ENCODE measurements at regions of chr7 and their contacts with region 1.

Region 1: DNA sequence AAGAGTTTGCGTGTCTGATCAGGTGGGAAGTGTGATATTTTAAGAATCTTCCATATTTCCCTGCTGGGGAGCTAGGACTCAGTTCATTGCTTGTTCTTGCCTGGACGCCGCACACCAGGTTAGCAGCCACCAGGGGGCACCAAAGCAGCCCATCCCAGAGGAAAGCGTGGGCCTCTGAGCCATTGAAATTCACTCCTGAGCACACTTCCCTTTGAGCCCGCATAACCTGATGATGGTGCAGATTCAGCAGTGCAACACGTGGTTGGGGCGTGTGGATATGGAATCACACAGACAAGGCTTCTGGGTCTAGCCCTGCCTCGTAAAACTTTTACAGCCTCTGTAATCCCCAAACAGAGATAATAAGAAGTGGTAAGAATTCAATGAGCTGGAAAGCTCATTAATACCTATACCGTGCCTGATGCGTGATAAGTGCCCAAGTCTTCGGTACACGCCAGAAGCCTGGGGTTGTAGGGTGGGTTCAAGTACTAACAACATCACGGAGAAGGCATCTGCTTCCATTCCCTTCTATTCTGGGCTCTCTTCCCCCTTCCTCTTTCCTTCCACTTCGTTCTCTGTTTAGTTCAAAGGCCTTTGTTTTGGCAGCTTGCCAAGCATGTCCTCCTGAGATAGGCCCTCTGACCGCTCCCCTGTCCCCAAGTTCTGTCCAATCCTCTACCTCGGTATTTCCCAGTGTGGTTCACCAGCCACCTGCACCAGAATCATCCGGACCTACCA is 130.1 kb upstream of the KMT2E start:
- DNase-seq: no peak
- H3K4me3 ChIP-seq: no peak overlapping the region
- CTCF ChIP-seq: peak; percentile 96

Region 2: DNA sequence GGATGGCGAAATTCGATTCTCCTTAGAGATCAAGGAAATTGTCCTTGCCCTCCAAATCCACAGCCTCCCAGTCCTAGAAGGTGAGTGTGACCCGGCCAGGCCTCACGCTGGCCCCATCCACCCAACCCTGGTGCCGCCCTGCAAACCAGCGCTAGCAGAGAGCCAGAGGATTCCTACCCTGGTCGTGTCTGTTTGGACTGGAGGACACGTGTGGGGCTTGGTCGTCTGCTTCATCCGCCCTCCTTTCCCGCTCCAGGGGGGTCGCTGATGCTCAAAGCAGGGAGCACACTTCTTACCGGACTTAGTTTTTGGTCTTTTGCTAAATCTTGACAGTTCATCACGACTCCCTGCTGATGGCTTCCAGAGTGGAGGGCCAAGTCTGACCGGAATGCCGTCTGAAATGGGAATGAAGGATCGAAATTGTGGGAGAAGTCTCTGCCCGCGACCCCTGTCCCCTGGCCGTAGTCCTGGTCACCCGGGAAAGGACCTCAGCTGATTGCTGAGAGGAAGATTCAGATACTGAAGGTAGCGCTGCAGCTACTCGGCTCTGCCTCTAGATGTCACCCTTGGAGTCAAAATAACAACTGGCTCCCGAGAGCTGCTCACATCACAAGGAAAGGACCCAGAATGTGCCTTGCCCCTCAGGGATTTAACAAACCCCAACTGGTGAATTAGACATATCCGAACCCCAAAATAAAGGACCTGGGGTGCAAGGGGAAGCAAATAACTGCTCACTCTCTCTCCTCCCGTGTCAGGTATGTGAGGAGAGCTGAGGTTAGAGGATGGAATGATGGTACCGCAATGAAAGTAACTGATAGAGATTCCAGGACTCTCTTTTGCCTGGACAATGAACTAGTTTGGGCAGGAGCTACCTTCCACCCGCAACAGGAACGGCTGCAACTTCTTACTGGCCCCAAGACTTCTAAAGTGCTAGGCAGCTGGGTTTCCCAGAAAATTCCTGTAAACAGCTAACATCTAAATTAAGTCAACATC is 652.5 kb before region 1 on chr7:
- CTCF ChIA-PET with region 1: interaction called, 12 read pairs
- POLR2A ChIA-PET with region 1: no interaction called
- DNase-seq: no peak
- H3K4me3 ChIP-seq: peak overlapping the region; percentile 23
- CTCF ChIP-seq: peak; percentile 79

Region 3: DNA sequence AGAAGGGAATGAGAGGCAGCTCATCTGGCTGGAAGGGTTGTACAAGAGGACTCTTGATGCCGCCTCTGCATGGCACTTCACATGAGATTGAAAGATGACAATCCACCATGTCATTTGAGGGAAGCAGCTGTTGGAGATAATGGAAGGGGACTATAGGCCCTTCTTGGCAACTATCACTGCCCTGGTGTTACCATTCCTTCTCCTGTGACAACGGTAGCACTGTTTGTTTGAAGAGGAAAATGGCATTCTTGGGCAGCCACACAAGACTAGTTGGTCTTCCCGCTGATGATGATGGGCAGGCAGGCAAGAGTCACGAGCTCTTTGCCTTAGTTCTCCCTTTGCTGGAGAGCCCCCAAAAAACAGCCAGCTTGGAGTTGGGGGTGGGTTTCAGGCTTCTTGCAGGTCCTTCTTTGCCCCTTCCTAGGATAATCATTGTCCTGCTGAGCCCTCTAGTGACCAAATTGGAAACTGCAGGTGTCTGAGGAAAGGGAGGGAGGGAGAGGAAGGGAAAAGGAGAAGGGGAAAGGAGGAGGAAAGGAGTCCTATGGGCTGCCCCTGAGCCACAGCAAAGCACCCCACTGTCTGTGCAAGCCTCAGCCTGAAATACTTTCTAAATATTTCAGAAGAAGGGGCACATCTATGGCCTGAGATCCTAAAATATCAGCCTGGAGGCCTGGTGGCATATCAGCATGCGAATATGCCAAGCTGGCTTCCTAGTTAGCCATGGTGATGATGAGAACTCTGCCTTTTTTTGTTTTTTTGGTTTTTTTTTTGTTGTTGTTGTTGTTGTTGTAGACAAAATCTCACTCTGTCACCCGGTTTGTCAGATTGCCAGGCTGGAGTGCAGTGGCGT is 35.5 kb before region 1 on chr7:
- CTCF ChIA-PET with region 1: interaction called, 15 read pairs
- POLR2A ChIA-PET with region 1: no interaction called
- DNase-seq: no peak
- H3K4me3 ChIP-seq: no peak overlapping the region
- CTCF ChIP-seq: peak; percentile 78

Region 4: GRCh38 chr7:104862719-104863118 is 21.2 kb before region 1 on chr7:
- CTCF ChIA-PET with region 1: interaction called, 14 read pairs
- POLR2A ChIA-PET with region 1: no interaction called
- DNase-seq: no peak
- H3K4me3 ChIP-seq: no peak overlapping the region
- CTCF ChIP-seq: peak; percentile 32

Region 5: DNA sequence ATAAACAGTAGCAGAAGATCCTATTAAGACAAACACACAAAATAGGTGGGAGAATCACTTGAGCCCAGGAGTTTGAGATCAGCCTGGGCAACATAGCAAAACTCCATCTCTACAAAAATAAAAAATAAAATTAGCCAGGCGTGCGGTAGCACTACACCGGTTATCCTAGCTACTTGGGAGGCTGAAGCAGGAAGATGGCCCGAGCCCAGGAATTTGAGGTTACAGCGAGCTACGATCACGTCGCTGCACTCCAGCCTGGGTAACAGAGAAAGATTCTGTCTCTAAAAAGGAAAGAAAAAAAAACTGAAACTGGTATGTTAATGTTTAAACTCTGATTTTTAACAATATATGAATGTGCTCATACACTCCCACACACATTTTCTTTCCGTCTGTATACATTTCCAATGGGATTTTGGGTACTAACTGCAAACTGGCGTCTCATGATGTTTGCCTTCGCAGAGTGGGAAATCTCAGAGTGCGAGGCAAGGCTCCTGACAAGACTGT is 10.5 kb before region 1 on chr7:
- CTCF ChIA-PET with region 1: interaction called, 43 read pairs
- POLR2A ChIA-PET with region 1: no interaction called
- DNase-seq: no peak
- H3K4me3 ChIP-seq: no peak overlapping the region
- CTCF ChIP-seq: no peak

Region 6: DNA sequence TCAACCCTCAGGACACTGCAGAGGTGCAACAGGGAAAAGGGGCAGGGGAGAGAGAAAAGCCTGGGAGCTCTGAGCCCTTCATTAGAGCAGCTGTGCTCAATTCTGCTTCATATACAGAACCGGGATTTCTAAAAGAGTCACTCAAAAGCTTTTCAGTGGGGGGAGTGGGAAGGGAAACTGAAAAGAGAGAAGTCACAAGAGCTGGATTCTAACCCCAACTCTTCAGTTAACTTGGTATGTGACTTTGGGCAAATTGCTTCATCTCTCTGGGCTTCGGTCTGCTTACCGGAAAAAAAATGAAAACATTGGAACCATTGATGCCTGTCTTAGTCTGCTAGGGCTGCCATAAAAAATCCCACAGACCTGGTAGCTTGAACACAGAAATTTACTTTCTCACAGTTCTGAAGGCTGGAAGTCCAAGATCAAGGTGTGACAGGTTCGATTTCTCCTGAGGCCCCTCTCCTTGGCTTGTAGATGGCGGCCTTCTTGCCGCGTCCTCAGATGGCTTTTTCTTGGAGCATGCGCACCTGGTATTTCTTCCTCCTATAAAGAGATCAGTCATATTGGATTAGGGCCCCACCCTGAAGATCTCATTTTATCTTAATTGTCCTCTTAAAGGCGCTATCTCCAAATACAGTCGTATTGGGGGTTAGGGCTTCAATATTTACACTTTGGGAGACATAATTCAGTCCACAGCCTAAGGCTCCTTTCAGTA is 11.8 kb after region 1 on chr7:
- CTCF ChIA-PET with region 1: interaction called, 192 read pairs
- POLR2A ChIA-PET with region 1: no interaction called
- DNase-seq: no peak
- H3K4me3 ChIP-seq: no peak overlapping the region
- CTCF ChIP-seq: no peak

Region 7: DNA sequence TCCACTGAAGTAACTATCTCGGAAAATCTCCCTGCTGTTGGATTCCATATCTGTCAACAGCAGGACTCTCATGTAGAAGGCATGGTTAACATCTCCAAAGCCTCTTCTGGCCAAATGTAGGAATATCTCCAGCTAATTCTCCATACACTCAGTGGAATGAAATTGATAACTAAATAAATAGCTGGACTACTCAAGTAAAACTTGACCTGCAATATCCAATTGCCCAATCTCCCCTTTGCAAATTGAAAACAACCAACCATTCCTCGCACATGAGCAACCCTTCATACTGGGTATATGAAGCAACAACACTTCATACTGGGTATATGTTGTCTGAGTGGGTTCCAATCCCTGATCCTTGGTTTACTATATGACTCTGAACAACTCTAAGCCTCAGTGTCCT is 24.8 kb after region 1 on chr7:
- CTCF ChIA-PET with region 1: interaction called, 417 read pairs
- POLR2A ChIA-PET with region 1: no interaction called
- DNase-seq: no peak
- H3K4me3 ChIP-seq: no peak overlapping the region
- CTCF ChIP-seq: no peak

Region 8: DNA sequence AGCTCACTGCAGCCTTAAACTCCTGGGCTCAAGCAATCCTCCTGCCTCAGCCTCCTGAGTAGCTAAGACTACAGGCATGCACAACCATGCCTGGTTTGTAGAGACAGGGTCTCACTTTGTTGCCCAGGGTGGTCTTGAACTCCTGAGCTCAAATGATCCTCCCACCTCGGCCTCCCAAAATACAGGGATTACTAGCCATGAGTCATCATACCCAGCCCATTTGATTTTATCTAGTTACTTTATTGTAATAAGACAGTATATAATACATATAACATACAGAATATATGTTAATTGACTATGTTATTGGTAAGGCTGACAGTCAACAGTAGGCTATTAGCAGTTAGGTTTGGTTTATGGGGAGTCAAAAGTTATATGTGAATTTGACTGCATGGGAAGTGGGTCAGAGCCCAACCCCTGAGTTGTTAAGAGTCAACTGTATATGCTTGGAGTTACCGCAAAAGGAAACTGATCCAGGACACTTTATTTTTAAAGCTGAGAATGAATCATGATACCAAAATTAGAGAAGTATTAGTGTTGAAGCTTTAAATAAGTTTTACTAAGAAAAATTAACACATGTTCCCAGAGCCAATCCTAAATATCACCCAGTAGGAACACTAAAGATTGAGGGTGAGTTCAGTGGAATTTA is 109.5 kb after region 1 on chr7:
- CTCF ChIA-PET with region 1: no interaction called
- POLR2A ChIA-PET with region 1: no interaction called
- DNase-seq: no peak
- H3K4me3 ChIP-seq: no peak overlapping the region
- CTCF ChIP-seq: no peak

Region 9: GRCh38 chr7:105097619-105098018 is 213.7 kb after region 1 on chr7:
- CTCF ChIA-PET with region 1: no interaction called
- POLR2A ChIA-PET with region 1: no interaction called
- DNase-seq: peak; percentile 86
- H3K4me3 ChIP-seq: no peak overlapping the region
- CTCF ChIP-seq: no peak

Region 10: GRCh38 chr7:105559926-105560325 is 676.0 kb after region 1 on chr7:
- CTCF ChIA-PET with region 1: no interaction called
- POLR2A ChIA-PET with region 1: no interaction called
- DNase-seq: no peak
- H3K4me3 ChIP-seq: no peak overlapping the region
- CTCF ChIP-seq: no peak